Right ventricle myocardium inferior (tissue), 1 donor: ENCODE measurements at regions of chr7 and their contacts with region 1.

Region 1: DNA sequence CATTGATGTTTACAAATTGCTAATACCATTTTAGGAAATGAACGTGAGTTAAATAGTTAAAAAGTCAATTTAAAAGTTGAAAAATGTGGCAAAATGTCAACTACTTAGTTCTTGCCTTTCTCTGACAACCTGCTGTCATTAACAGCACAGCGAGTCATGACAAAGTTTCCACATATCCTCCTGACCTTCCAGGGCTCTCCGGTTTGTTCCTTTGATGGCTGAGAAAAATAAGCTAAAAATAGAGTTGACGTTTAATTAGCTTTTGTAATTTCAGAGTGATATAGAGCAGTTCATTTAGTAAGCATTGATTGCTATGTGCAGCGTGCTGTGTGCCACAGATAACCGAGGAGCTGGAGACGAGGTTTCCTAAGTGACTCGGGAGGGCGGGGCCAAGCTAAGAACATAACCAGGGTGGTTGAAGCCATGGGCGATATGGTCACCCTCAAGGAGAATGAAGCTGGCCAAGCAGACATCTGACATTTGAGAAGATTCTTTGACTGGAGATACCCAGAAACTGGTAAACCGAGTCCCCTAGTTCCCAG is 47.9 kb downstream of the OGDH start:
- DNase-seq: no peak
- ATAC-seq: peak; percentile 82

Region 2: DNA sequence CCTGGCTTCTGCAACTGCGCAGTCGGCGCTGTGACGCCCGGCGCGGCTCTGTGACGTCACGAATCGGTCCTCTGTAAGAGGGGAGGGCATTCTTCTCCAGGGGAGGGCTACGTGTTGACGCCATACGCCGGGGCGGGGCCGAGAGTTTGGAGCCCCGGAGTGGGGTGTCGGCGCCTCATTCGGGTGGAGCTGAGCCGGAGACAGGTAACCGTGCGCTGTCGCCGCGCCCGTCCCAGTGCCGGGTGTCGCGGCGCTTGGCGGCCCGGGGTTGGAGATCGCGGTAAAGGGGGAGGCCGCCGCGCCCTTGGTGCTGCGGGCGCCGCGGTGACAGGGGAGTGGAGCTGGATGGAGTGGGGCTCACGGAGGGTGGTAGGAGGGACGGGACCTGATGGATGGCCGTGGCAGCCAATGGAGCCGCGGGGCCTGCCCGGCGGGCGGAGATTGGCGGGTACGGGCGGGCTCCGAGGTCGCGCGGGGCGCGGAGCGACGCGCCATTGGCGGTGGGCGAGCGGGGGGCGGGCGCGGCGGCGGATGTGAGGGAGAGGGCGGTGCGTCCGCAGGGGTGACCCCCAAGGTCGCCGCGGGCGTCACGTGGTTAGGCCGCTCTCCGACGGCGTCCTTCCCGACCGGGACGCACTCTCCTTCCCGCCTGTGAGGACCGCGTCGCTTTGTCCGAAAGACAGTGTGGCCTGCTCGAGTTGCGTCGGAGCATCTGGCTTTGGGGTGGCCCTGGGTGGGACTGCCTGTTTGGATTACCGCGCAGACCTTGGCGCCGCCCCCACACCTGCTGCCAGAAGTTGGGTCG is 47.7 kb before region 1 on chr7 and contains the start of gene OGDH:
- intact Hi-C with region 1: loop called (anchors 2 kb)
- DNase-seq: peak; percentile 100
- ATAC-seq: peak; percentile 98
- total RNA-seq, gene OGDH: 679 TPM

Region 3: DNA sequence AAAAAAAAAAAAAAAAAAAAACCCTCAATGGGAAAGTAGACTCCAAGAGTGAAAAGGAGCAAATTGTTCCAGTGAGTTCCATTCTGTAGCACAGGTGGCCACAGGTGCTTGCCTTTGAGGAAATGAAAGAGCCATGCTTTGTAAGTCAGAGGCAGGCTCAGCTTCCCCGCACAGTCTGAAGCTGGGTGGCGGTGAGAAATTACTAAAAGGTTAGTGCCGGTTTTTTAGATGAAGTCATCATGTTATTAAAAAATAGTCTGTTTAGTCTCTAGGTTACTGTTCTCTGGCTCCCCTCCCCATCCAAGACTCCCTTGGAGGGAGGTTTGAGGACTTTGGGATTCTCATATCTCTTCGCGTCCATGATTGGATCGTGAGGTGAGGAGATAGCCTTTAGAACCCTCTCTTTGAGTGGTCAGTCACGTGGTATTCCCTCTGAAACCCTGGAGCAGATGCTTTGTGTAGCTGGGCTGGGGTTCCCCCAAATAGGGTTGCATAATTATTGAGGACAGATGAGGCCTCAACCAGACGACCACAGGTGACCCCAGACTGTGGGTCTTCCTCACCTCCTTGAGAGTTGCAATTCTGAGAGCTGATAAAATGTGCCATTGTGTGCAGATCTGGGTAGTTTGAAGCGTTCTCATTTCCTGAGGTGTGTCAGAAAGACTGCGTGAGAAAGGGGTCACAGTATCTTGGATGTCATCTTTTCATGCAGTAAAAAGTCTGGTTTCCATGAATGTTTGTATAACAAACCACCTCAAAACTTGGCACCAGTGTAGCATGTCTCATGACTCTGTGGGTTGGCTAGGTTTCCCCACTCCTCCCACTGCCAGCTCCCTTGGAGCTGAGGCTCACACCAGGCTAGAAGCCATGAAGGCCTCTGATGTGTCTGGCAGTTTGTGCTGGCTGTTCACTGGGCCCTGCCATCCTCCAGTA is 20.8 kb before region 1 on chr7:
- intact Hi-C with region 1: loop called (anchors 2 kb)
- DNase-seq: peak; percentile 78
- ATAC-seq: peak; percentile 67

Region 4: DNA sequence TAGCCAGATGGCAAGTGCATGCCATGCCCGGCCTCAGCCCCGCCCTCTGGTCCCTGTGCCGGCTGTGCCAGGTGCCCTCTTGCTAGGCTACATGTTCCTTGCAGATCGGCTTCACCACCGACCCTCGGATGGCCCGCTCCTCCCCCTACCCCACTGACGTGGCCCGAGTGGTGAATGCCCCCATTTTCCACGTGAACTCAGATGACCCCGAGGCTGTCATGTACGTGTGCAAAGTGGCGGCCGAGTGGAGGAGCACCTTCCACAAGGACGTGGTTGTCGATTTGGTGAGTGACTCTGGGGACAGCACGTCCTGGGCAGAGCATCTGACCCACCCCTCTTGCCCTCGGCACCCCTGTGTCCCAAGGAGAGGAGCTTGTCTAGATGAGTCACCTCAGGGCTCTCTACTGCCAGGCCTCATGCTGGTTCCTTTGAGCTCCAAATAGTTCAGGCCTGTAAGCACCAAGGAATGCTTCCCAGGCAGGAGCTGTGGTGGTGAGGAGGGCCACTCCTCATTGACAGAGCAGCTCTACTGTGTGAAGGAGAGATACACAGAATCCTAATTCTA is 39.5 kb after region 1 on chr7:
- intact Hi-C with region 1: no loop called
- DNase-seq: peak; percentile 73
- ATAC-seq: peak; percentile 90